CD14-positive monocyte (primary cell): ENCODE measurements at regions of chrX and their contacts with region 1.

Region 1: GRCh38 chrX:154748712-154749343 is 2.0 kb downstream of the GAB3 start:
- DNase-seq: peak; percentile 44 to 67 (median 61)
- H3K4me3 ChIP-seq: peak overlapping the region in 1 of 3 experiments; percentile 82
- H3K4me3 Mint-ChIP-seq: peak overlapping the region; percentile 34 to 90
- H3K27ac ChIP-seq: peak overlapping the region in 1 of 2 donors; percentile 48
- H3K27ac Mint-ChIP-seq: no peak overlapping the region
- H3K4me1 ChIP-seq: peaks cover 32 to 37% of the 10 kb centered on the region in 2 donors
- H3K4me1 Mint-ChIP-seq: peaks cover 43% of the 10 kb centered on the region
- H3K27me3 ChIP-seq: no peaks in the 10 kb centered on the region
- H3K27me3 Mint-ChIP-seq: peaks cover 0 to 6% (median 0%) of the 10 kb centered on the region in 3 donors
- CTCF ChIP-seq: peak; percentile 71

Region 2: DNA sequence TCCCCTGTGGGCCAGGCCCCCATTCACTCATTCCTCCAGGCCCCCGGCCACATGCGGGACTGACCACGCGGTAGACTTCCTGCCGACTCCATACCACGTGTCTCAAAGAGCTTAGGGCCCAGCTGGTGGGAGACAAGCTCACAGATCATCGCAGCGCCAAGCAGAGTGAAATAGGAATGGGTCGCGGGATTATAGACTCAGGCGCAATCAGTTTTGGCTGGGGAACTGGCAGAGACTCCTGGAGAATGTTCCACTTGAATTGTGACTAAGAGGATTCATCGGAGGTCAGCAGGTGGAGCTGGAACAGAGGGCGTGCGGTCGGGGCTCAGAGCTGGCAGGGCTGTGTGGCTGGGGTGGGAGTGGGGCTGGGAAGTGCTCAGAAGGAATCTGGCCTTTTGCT is 1215.7 kb before region 1 on chrX:
- intact Hi-C with region 1: no loop called
- DNase-seq: no peak
- H3K4me3 ChIP-seq: no peak overlapping the region
- H3K4me3 Mint-ChIP-seq: no peak overlapping the region
- H3K27ac ChIP-seq: no peak overlapping the region
- H3K27ac Mint-ChIP-seq: peak overlapping the region in 1 of 7 donors; percentile 85
- H3K4me1 ChIP-seq: no peaks in the 10 kb centered on the region
- H3K4me1 Mint-ChIP-seq: no peaks in the 10 kb centered on the region
- H3K27me3 ChIP-seq: no peaks in the 10 kb centered on the region
- H3K27me3 Mint-ChIP-seq: peaks cover 2 to 22% (median 5%) of the 10 kb centered on the region in 3 donors
- CTCF ChIP-seq: no peak

Region 3: DNA sequence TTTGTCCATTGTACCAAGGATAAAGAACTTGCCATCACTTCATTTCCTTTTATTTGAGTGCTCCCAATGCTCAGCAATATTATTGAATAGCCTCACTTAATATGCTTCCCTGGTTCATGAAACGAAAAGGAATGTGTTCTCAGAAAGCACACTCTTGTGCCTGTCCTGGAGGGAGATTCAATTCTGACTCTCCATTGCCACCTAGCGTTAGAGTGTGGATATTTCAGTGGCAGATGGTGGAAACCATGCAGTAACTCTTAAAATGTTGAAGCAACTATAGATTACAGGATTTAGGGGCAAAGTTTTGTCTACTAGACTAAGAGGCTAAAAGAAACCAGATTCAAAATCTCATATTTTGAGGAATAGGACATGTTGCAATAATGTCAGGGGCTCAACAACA is 33.9 kb before region 1 on chrX:
- intact Hi-C with region 1: loop called (anchors 5 kb)
- DNase-seq: peak in 2 of 3 donors; percentile 43 to 51
- H3K4me3 ChIP-seq: no peak overlapping the region
- H3K4me3 Mint-ChIP-seq: no peak overlapping the region
- H3K27ac ChIP-seq: no peak overlapping the region
- H3K27ac Mint-ChIP-seq: no peak overlapping the region
- H3K4me1 ChIP-seq: peaks cover 61 to 65% of the 10 kb centered on the region in 2 donors
- H3K4me1 Mint-ChIP-seq: peaks cover 68% of the 10 kb centered on the region
- H3K27me3 ChIP-seq: no peaks in the 10 kb centered on the region
- H3K27me3 Mint-ChIP-seq: peaks cover 0 to 9% (median 0%) of the 10 kb centered on the region in 3 donors
- CTCF ChIP-seq: peak; percentile 68

Region 4: DNA sequence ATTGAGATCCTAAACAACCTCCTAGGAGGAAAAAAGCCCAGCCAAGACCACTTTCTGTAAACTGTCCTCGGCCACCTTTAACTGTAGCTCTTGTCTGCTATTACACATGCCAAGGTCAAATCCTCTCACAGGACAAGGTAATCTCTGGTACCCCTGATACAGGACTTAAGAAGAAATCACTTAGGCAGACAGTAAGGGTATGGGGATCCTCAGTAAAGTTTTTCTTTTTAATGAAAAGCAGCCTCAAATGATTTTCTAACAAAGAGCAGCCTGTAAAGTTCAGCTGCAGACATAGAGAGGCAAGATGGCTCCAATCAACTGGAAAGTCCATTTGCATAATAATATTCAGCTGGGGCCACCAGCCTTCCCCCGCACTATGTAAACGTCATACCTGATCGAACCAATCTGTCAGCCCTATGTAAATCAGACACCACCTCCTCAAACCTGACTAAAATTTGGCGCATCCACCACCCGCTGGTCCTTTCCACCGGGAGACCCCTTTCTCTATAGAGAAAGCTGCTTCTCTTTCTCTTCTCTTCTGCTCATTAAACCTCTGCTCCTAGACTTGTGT is 71.0 kb after region 1 on chrX:
- intact Hi-C with region 1: no loop called
- DNase-seq: no peak
- H3K4me3 ChIP-seq: no peak overlapping the region
- H3K4me3 Mint-ChIP-seq: no peak overlapping the region
- H3K27ac ChIP-seq: no peak overlapping the region
- H3K27ac Mint-ChIP-seq: peak overlapping the region in 1 of 7 donors; percentile 42
- H3K4me1 ChIP-seq: no peaks in the 10 kb centered on the region
- H3K4me1 Mint-ChIP-seq: no peaks in the 10 kb centered on the region
- H3K27me3 ChIP-seq: no peaks in the 10 kb centered on the region
- H3K27me3 Mint-ChIP-seq: peaks cover 0 to 2% (median 0%) of the 10 kb centered on the region in 3 donors
- CTCF ChIP-seq: no peak